SK-N-SH (cell line): ENCODE measurements at regions of chr1 and their contacts with region 1.

Region 1: GRCh38 chr1:115980998-115981993 is 5.0 kb downstream of the SLC22A15 start:
- DNase-seq: peak; percentile 73
- H3K4me3 ChIP-seq: peak overlapping the region in 1 of 2 experiments; percentile 38; a peak in 1 of 4 replicates
- H3K27ac ChIP-seq: no peak overlapping the region; a peak in 1 of 4 replicates
- H3K4me1 ChIP-seq: peaks cover 0 to 4% of the 10 kb centered on the region in 2 experiments; a peak in 1 of 4 replicates
- H3K27me3 ChIP-seq: peaks cover 8% of the 10 kb centered on the region; the same call in 1 of the 2 replicates
- CTCF ChIP-seq: peak; percentile 77
- EP300 ChIP-seq: no peak
- RAD21 ChIP-seq: peak; percentile 87

Region 2: GRCh38 chr1:115609021-115609420 is 372.3 kb before region 1 on chr1:
- CTCF ChIA-PET with region 1: interaction called, 21 read pairs
- POLR2A ChIA-PET with region 1: no interaction called
- DNase-seq: no peak
- H3K4me3 ChIP-seq: no peak overlapping the region
- H3K27ac ChIP-seq: no peak overlapping the region
- H3K4me1 ChIP-seq: no peaks in the 10 kb centered on the region
- H3K27me3 ChIP-seq: peaks cover 16% of the 10 kb centered on the region; the same call in 1 of the 2 replicates
- CTCF ChIP-seq: no peak
- EP300 ChIP-seq: no peak
- RAD21 ChIP-seq: no peak

Region 3: DNA sequence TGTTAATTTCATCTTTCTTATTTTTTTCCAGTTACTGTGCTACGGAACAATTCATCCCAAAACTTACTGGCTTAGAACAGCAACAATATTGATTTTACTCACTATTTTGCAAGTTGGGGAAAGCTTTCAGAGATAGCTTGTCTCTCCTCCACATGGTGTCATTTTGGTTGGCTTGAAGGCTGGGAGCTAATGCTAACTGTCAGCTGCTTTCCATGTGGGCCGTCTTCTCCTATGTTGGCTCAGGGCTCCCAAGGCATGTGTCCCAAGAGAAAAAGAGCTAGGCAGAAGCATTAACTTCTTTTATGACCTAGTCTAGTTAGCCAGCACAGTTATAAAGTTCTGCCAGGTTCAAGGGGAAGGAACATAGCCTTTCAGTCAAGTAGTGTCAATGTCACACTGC is 178.9 kb before region 1 on chr1:
- CTCF ChIA-PET with region 1: interaction called, 87 read pairs
- POLR2A ChIA-PET with region 1: no interaction called
- DNase-seq: no peak
- H3K4me3 ChIP-seq: no peak overlapping the region
- H3K27ac ChIP-seq: no peak overlapping the region
- H3K4me1 ChIP-seq: no peaks in the 10 kb centered on the region
- H3K27me3 ChIP-seq: no peaks in the 10 kb centered on the region
- CTCF ChIP-seq: no peak
- EP300 ChIP-seq: no peak
- RAD21 ChIP-seq: no peak

Region 4: GRCh38 chr1:115826628-115827027 is 154.7 kb before region 1 on chr1:
- CTCF ChIA-PET with region 1: interaction called, 13 read pairs
- POLR2A ChIA-PET with region 1: no interaction called
- DNase-seq: no peak
- H3K4me3 ChIP-seq: no peak overlapping the region
- H3K27ac ChIP-seq: no peak overlapping the region
- H3K4me1 ChIP-seq: peaks cover 0 to 4% of the 10 kb centered on the region in 2 experiments; a peak in 1 of 4 replicates
- H3K27me3 ChIP-seq: peaks cover 12% of the 10 kb centered on the region; the same call in 1 of the 2 replicates
- CTCF ChIP-seq: no peak
- EP300 ChIP-seq: no peak
- RAD21 ChIP-seq: no peak

Region 5: DNA sequence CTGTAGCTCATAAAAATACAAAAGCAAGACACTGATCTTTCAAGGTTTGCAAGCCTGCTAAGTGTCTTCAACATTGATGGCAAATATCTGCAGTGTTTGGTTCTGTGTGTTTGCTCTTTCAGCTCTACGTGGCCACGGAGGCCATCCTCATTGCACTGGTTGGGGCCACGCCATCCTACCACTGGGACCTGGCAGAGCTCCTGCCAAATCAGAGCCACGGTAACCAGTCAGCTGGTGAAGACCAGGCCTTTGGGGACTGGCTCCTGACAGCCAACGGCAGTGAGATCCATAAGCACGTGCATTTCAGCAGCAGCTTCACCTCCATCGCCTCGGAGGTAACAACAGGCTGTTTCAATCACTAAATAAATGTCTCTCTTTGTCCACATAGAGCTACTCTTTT is 10.6 kb after region 1 on chr1:
- CTCF ChIA-PET with region 1: interaction called, 32 read pairs
- POLR2A ChIA-PET with region 1: no interaction called
- DNase-seq: no peak
- H3K4me3 ChIP-seq: no peak overlapping the region
- H3K27ac ChIP-seq: no peak overlapping the region
- H3K4me1 ChIP-seq: no peaks in the 10 kb centered on the region
- H3K27me3 ChIP-seq: no peaks in the 10 kb centered on the region
- CTCF ChIP-seq: no peak
- EP300 ChIP-seq: no peak
- RAD21 ChIP-seq: no peak